A549 (cell line): ENCODE measurements at regions of chr5 and their contacts with region 1.

Region 1: GRCh38 chr5:145908205-145908945 is 28.0 kb upstream of the SH3RF2 start:
- DNase-seq: peak; percentile 20 to 21
- ATAC-seq: peak; percentile 69 to 76; a peak in 4 of 6 replicates
- H3K4me3 ChIP-seq: no peak overlapping the region
- H3K27ac ChIP-seq: no peak overlapping the region
- H3K4me1 ChIP-seq: no peaks in the 10 kb centered on the region; the same call in 2 of the 3 replicates
- CTCF ChIP-seq: peak; percentile 52
- EP300 ChIP-seq: no peak
- POLR2A ChIP-seq: no peak
- RAD21 ChIP-seq: peak; percentile 58 to 60

Region 2: DNA sequence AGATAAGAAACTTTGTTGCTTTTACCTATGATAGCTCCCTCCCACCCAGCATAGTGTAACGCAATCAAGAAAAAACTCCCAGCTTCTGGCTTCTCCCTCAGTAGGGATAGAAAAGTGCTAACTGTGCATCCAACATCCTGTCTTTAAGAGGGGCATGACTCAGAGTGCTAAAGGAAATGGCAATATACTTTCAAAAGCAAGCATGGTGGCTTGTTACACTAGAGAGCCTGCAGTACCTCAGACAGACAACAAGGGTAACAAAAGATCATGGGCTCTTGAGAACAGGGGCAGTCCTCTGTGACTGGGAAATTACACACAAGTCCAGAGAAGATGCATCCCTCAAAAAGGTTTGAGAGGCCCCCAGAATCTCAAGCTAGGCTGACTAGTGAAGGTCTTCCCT is 111.0 kb before region 1 on chr5:
- CTCF ChIA-PET with region 1: no interaction called
- POLR2A ChIA-PET with region 1: no interaction called
- DNase-seq: no peak
- ATAC-seq: peak; percentile 58 to 62; a peak in 4 of 6 replicates
- H3K4me3 ChIP-seq: no peak overlapping the region
- H3K27ac ChIP-seq: no peak overlapping the region
- H3K4me1 ChIP-seq: no peaks in the 10 kb centered on the region
- CTCF ChIP-seq: no peak
- EP300 ChIP-seq: no peak
- POLR2A ChIP-seq: no peak
- RAD21 ChIP-seq: no peak

Region 3: DNA sequence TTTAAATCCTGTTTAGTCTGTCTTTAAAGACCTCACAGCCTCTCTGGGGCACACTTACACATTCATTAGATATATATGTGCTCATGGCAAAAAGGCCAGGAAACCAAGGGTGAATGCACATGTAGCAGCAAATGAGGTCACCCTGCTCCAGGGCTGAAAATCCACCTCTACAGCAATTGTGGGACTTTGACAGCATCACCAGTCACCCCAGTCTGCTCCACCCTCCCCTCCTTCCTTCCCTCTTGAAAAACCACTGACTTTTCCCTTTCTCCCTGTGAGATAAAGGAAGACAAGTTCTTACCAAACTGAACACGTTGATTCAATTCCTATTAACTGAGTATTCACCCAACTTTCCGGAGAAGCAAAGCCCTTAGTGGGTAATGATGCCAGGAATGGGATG is 12.8 kb after region 1 on chr5:
- CTCF ChIA-PET with region 1: interaction called, 19 read pairs
- POLR2A ChIA-PET with region 1: no interaction called
- DNase-seq: no peak
- ATAC-seq: no peak
- H3K4me3 ChIP-seq: no peak overlapping the region
- H3K27ac ChIP-seq: no peak overlapping the region
- H3K4me1 ChIP-seq: peaks cover 28% of the 10 kb centered on the region
- CTCF ChIP-seq: no peak
- EP300 ChIP-seq: no peak
- POLR2A ChIP-seq: no peak
- RAD21 ChIP-seq: no peak

Region 4: DNA sequence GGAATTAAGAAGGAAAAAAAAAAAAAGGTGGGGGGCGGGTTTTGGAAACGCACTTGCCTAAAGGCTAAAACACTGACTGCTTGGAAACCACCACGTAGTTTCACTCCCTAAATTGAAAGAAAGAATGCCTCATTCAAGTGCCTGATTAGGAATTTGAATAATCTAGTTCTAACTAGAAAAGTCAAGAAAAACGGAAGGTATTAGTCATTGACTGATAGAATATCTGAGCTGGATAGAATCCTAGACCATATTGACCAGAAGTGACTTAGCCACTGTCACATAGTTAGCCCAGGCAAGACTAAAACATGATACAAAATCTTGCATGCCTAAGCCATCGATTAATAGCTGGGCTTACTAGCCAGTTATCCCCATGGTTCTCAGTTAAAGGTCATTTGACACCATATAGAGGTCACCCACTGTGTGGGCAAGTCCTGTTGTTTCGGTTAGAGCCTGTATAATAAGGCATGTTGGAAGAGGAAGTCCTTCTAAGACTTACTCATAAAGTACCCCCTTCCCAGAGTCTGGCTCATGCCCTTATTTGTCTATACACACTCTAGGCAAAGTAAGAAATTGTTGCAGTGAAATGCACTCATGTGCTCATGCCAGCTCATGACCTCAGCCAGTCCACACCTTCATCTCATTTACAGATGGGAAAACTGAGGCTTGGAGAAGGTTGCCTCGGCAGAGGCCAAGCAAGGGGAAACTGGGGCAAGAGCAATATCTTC is 68.2 kb after region 1 on chr5:
- CTCF ChIA-PET with region 1: interaction called, 17 read pairs
- POLR2A ChIA-PET with region 1: no interaction called
- DNase-seq: peak in 1 of 2 experiments; percentile 44
- ATAC-seq: peak in 1 of 2 experiments; percentile 36; a peak in 2 of 6 replicates
- H3K4me3 ChIP-seq: no peak overlapping the region
- H3K27ac ChIP-seq: peak overlapping the region; percentile 85
- H3K4me1 ChIP-seq: peaks cover 72% of the 10 kb centered on the region
- CTCF ChIP-seq: no peak
- EP300 ChIP-seq: no peak
- POLR2A ChIP-seq: no peak
- RAD21 ChIP-seq: no peak

Region 5: GRCh38 chr5:145981589-145982491 is 73.5 kb after region 1 on chr5:
- CTCF ChIA-PET with region 1: interaction called, 17 read pairs
- POLR2A ChIA-PET with region 1: no interaction called
- DNase-seq: peak in 1 of 2 experiments; percentile 18
- ATAC-seq: no peak; a peak in 1 of 6 replicates
- H3K4me3 ChIP-seq: no peak overlapping the region
- H3K27ac ChIP-seq: peak overlapping the region; percentile 57 to 69
- H3K4me1 ChIP-seq: peaks cover 61% of the 10 kb centered on the region
- CTCF ChIP-seq: no peak
- EP300 ChIP-seq: no peak
- POLR2A ChIP-seq: no peak
- RAD21 ChIP-seq: no peak

Region 6: DNA sequence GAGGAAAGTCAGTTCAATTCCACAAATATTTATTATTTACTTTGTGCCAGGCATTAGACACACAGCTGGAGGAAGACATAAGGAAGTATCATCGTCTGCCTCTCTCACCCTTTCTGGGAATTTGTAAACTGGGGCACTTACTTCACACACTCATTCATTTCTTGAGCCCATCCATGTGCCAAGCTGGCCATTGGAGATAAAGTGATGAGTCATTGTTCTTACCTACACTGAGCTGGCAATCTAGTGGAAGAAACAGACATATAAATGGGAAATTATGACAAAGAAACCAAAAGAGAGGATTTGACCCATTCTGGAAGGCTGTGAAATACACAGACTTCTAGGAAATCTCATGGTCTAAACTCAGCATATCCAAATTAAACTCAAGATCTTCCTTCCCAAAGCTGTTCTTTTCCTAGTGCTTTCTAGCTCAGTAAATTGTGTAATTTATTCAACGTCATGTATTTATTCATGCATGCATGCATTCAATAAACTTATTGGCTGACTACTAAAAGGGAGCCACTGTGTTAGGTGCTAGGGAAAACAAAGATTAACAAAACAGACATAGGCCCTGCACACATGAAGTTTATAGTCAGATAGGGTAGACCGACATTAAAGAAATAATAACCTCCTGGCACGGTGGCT is 93.3 kb after region 1 on chr5:
- CTCF ChIA-PET with region 1: interaction called, 11 read pairs
- POLR2A ChIA-PET with region 1: no interaction called
- DNase-seq: no peak
- ATAC-seq: no peak
- H3K4me3 ChIP-seq: no peak overlapping the region
- H3K27ac ChIP-seq: peak overlapping the region; percentile 43 to 76; a peak in 5 of 6 replicates
- H3K4me1 ChIP-seq: peaks cover 21% of the 10 kb centered on the region
- CTCF ChIP-seq: no peak
- EP300 ChIP-seq: no peak
- POLR2A ChIP-seq: no peak
- RAD21 ChIP-seq: no peak

Region 7: DNA sequence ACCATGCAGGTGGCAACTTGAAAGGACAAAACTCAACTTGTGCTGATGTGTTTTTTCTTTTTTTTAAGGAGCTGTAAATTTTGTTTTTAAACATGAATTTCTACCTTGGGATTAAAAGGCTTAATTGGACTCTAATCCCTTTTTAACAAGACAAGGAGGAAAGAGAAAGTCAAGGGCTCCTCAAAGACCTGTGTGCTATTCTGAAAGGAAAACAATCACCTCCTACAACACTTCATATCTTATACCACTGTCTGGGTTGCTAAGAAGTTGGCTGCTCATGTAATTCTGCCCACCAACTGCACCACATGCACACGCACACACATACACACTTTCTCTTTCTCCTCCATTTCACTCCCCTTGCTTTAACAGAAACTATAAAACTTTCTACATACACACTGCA is 106.6 kb after region 1 on chr5:
- CTCF ChIA-PET with region 1: no interaction called
- POLR2A ChIA-PET with region 1: no interaction called
- DNase-seq: no peak
- ATAC-seq: no peak
- H3K4me3 ChIP-seq: no peak overlapping the region
- H3K27ac ChIP-seq: no peak overlapping the region
- H3K4me1 ChIP-seq: no peaks in the 10 kb centered on the region; the same call in 2 of the 3 replicates
- CTCF ChIP-seq: no peak
- EP300 ChIP-seq: no peak
- POLR2A ChIP-seq: no peak
- RAD21 ChIP-seq: no peak

Region 8: DNA sequence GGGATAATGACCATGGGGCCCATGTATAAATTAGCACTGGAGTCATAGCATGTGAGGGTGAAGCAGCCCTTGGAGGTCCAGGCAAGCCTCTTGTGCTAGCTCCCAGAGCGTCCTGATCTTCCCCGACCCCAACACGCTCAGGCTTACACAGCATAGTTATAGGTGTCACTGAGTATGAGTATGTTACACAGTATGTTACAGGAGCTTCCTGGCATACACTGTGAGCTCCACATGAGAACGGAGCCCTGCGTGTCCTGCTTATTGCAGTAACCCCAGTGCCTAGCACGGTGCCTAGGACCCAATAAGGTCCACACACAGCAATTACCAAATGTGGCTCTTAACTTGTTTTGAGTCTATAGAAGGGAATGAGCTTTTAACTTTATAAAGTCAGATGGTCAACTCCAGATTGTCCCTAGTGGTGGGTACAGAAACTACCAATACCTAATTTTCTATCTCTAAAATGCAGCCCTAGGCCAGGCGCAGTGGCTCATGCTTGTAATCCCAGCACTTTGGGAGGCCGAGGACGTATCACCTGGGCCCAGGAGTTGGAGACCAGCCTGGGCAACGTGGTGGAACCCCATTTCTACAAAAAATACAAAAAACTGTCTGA is 132.9 kb after region 1 on chr5:
- CTCF ChIA-PET with region 1: interaction called, 81 read pairs
- POLR2A ChIA-PET with region 1: no interaction called
- DNase-seq: peak in 1 of 2 experiments; percentile 33
- ATAC-seq: peak; percentile 80 to 88; a peak in 5 of 6 replicates
- H3K4me3 ChIP-seq: no peak overlapping the region
- H3K27ac ChIP-seq: peak overlapping the region in 1 of 2 experiments; percentile 78; a peak in 2 of 6 replicates
- H3K4me1 ChIP-seq: peaks cover 26% of the 10 kb centered on the region
- CTCF ChIP-seq: peak; percentile 29; the same call in 1 of the 3 replicates
- EP300 ChIP-seq: no peak
- POLR2A ChIP-seq: no peak
- RAD21 ChIP-seq: peak; percentile 31 to 35; a peak in 4 of 5 replicates

Region 9: DNA sequence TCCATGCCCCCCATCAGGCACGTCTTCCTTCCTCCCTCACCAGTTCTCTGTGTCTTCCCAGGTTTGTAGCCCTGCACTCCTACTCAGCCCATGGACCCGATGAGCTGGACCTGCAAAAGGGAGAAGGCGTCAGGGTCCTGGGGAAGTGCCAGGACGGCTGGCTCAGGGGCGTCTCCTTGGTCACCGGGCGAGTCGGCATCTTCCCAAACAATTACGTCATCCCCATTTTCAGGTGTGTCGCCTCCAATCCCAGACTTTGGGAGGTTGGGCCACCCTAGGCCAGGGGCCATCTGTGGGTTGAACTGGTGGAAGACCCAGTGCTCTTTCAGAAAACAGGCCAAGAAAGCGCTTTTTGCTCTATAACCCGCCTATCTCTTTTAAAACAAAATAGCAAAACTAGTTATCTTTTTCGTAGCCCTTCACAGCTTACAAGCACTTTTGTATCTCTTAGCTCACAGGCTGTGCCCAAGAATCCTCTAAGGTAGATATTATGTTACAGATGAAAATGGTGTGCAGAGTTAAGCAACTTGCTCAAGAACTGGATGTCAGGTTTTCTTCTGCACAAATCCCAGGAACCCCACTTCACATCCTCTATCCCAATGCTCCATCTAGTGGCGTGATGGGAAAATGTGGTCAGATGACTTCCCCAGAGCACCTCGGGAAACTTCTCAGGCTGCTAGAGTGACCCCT is 140.8 kb after region 1 on chr5:
- CTCF ChIA-PET with region 1: interaction called, 81 read pairs
- POLR2A ChIA-PET with region 1: no interaction called
- DNase-seq: peak; percentile 76 to 81
- ATAC-seq: peak; percentile 86 to 94
- H3K4me3 ChIP-seq: no peak overlapping the region
- H3K27ac ChIP-seq: peak overlapping the region in 1 of 2 experiments; percentile 52; a peak in 2 of 6 replicates
- H3K4me1 ChIP-seq: peaks cover 5% of the 10 kb centered on the region; the same call in 2 of the 3 replicates
- CTCF ChIP-seq: peak; percentile 91
- EP300 ChIP-seq: no peak
- POLR2A ChIP-seq: no peak
- RAD21 ChIP-seq: peak; percentile 96 to 97

Region 10: DNA sequence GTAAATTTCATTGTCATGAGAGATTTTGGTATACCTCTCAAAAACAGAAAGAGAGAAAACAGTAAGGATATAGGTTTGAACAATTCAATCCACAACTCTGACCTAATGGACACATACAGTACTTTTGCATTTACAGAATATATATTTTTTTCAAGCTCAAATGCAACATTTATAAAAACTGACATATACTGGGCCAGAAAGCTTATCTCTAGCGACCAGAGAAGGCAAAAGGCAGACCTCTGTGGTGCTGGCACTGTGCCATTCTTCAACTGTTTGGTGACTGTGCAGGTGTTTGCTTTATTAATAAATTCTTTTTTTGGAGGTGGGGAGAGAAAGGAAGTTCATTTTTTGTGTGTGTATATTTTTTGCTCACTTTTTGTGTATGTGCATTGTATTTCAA is 203.0 kb after region 1 on chr5:
- CTCF ChIA-PET with region 1: no interaction called
- POLR2A ChIA-PET with region 1: no interaction called
- DNase-seq: no peak
- ATAC-seq: no peak
- H3K4me3 ChIP-seq: no peak overlapping the region
- H3K27ac ChIP-seq: no peak overlapping the region
- H3K4me1 ChIP-seq: no peaks in the 10 kb centered on the region
- CTCF ChIP-seq: no peak
- EP300 ChIP-seq: no peak
- POLR2A ChIP-seq: no peak
- RAD21 ChIP-seq: no peak